Endothelial cell of umbilical vein (primary cell): ENCODE measurements at regions of chr3 and their contacts with region 1.

Region 1: DNA sequence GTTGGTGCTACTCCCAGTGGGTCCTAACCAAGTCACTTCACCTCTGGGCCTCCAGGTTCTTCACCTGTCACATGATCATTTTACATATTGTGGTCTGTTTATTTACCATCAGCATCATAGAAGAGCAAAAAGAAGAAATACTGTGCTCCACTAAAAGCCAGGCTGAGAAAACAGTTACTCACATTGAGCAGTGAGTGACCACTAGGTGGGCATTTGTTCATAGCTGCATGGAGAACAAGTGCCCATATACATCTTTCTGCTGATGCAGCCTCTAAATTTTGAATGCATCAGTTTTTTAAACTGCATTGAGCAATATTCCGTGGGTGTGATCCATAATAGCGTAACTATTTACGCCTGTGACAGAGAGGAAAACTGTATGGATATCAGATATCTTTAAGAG is 76.2 kb downstream of the DCUN1D1 start:
- DNase-seq: no peak
- H3K4me3 ChIP-seq: no peak overlapping the region
- H3K27ac ChIP-seq: no peak overlapping the region
- H3K4me1 ChIP-seq: no peaks in the 10 kb centered on the region
- H3K27me3 ChIP-seq: no peaks in the 10 kb centered on the region
- CTCF ChIP-seq: no peak
- POLR2A ChIP-seq: no peak

Region 2: GRCh38 chr3:182917134-182917533 is 13.0 kb after region 1 on chr3:
- CTCF ChIA-PET with region 1: interaction called, 11 read pairs
- POLR2A ChIA-PET with region 1: no interaction called
- dilution Hi-C with region 1: no loop called
- intact Hi-C with region 1: no loop called
- DNase-seq: no peak
- H3K4me3 ChIP-seq: no peak overlapping the region
- H3K27ac ChIP-seq: no peak overlapping the region
- H3K4me1 ChIP-seq: no peaks in the 10 kb centered on the region
- H3K27me3 ChIP-seq: no peaks in the 10 kb centered on the region
- CTCF ChIP-seq: no peak
- POLR2A ChIP-seq: no peak